ENCODE measurements at regions of chr2 and their contacts with region 1.

Region 1: GRCh38 chr2:121577381-121577780 is 46.7 kb downstream of the RNU4ATAC start:
- DNase-seq: no peak
- H3K4me3 ChIP-seq: no peak overlapping the region
- H3K27ac ChIP-seq: no peak overlapping the region
- H3K4me1 ChIP-seq: no peaks in the 10 kb centered on the region
- H3K27me3 ChIP-seq: no peaks in the 10 kb centered on the region
- CTCF ChIP-seq: no peak
- POLR2A ChIP-seq: no peak

Region 2: GRCh38 chr2:120847700-120848321 is 729.6 kb before region 1 on chr2:
- intact Hi-C with region 1: no loop called
- DNase-seq: peak in 1 of 2 donors; percentile 43
- H3K4me3 ChIP-seq: peak overlapping the region in 1 of 3 donors; percentile 33
- H3K27ac ChIP-seq: peak overlapping the region; percentile 29 to 71
- H3K4me1 ChIP-seq: no peaks in the 10 kb centered on the region
- H3K27me3 ChIP-seq: no peaks in the 10 kb centered on the region
- CTCF ChIP-seq: no peak
- POLR2A ChIP-seq: no peak

Region 3: GRCh38 chr2:121596221-121597080 is 19.1 kb after region 1 on chr2:
- intact Hi-C with region 1: no loop called
- DNase-seq: no peak
- H3K4me3 ChIP-seq: peak overlapping the region in 1 of 3 donors; percentile 17
- H3K27ac ChIP-seq: peak overlapping the region in 1 of 2 donors; percentile 48
- H3K4me1 ChIP-seq: no peaks in the 10 kb centered on the region
- H3K27me3 ChIP-seq: no peaks in the 10 kb centered on the region
- CTCF ChIP-seq: peak in 2 of 3 donors; percentile 15 to 20
- POLR2A ChIP-seq: no peak

Region 4: DNA sequence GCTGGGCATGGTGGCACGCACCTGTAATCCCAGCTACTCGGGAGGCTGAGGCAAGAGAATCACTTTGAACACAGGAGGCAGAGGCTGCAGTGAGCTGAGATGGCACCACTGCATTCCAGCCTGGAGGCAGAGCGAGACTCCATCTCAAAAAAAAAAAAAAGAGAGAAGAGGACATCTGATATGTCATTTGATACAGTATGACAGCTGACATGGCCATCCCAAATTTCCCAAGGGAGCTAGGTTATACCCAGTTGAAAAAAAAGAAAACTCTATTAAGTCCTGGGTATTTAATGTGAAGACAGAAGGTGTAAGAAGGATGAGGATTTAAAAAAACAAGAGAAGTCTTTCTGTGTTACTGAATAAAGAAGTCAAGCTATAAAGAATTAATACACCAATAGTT is 48.6 kb after region 1 on chr2:
- intact Hi-C with region 1: loop called (anchors 2 kb)
- DNase-seq: no peak
- H3K4me3 ChIP-seq: no peak overlapping the region
- H3K27ac ChIP-seq: no peak overlapping the region
- H3K4me1 ChIP-seq: no peaks in the 10 kb centered on the region
- H3K27me3 ChIP-seq: no peaks in the 10 kb centered on the region
- CTCF ChIP-seq: no peak
- POLR2A ChIP-seq: no peak